SK-N-SH (cell line): ENCODE measurements at regions of chr7 and their contacts with region 1.

Region 1: GRCh38 chr7:876167-876967 is at the start of gene GET4:
- DNase-seq: peak; percentile 98
- H3K4me3 ChIP-seq: peak within 1 kb of the TSS; percentile 57 to 89
- H3K27ac ChIP-seq: peak within 1 kb of the TSS; percentile 61 to 87
- H3K4me1 ChIP-seq: peaks cover 11 to 29% of the 10 kb centered on the region in 2 experiments; a peak in 2 of 4 replicates
- H3K27me3 ChIP-seq: no peaks in the 10 kb centered on the region
- CTCF ChIP-seq: no peak
- EP300 ChIP-seq: 0 out of 4 replicates have a peak, but pooled peaks of 1 of the 2 experiments have one; percentile 17
- RAD21 ChIP-seq: no peak
- polyA plus RNA-seq, gene GET4: 63.1 and 65.4 TPM in 2 replicates

Region 2: GRCh38 chr7:688321-688720 is 188.0 kb before region 1 on chr7:
- CTCF ChIA-PET with region 1: no interaction called
- POLR2A ChIA-PET with region 1: no interaction called
- DNase-seq: no peak
- H3K4me3 ChIP-seq: no peak overlapping the region
- H3K27ac ChIP-seq: no peak overlapping the region
- H3K4me1 ChIP-seq: no peaks in the 10 kb centered on the region
- H3K27me3 ChIP-seq: no peaks in the 10 kb centered on the region
- CTCF ChIP-seq: no peak
- EP300 ChIP-seq: no peak
- RAD21 ChIP-seq: no peak

Region 3: DNA sequence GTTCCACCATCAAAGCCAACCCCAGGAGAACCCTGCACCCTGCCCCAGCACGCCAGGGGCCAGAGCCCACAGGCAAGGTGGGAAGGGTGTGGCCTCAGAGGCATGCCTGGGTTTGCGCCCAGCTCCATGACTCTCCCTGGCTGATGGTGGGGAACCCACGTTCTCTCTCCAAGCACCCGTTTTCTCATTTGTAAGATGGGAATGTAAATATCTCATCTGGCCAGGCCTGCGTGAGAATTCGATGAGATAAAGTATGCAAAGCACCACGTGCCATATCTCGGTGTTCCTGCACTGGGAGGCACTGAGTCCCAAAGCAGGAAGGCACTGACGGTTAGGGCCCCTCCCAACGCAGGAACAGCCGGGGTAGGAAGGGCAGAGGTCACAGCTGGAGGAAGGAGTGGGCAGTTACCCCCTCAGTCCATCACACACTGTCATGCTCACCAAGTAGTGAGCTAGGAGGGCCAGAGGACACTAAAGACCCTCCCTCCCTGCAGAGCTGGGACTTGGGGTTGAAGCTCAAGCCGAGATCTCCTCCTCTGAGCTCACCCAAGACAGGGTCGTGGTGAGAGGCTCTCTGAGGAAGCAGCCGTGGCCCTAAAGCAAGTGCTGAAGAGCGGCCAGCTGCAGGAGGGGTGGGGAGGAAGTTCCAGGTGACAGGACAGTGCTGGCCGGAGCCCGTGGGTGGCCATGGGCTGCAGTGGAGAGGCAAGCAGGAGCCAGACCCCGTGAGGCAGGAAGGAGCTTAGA is 177.1 kb before region 1 on chr7:
- CTCF ChIA-PET with region 1: no interaction called
- POLR2A ChIA-PET with region 1: no interaction called
- DNase-seq: no peak
- H3K4me3 ChIP-seq: no peak overlapping the region
- H3K27ac ChIP-seq: no peak overlapping the region
- H3K4me1 ChIP-seq: no peaks in the 10 kb centered on the region
- H3K27me3 ChIP-seq: no peaks in the 10 kb centered on the region
- CTCF ChIP-seq: no peak
- EP300 ChIP-seq: no peak
- RAD21 ChIP-seq: no peak

Region 4: GRCh38 chr7:749140-749551 is 127.2 kb before region 1 on chr7:
- CTCF ChIA-PET with region 1: no interaction called
- POLR2A ChIA-PET with region 1: no interaction called
- DNase-seq: peak; percentile 90
- H3K4me3 ChIP-seq: no peak overlapping the region
- H3K27ac ChIP-seq: peak overlapping the region in 1 of 2 experiments; percentile 68; a peak in 2 of 4 replicates
- H3K4me1 ChIP-seq: peaks cover 0 to 21% of the 10 kb centered on the region in 2 experiments; a peak in 2 of 4 replicates
- H3K27me3 ChIP-seq: no peaks in the 10 kb centered on the region
- CTCF ChIP-seq: no peak
- EP300 ChIP-seq: 0 out of 4 replicates have a peak, but pooled peaks of 1 of the 2 experiments have one; percentile 19
- RAD21 ChIP-seq: no peak

Region 5: GRCh38 chr7:768881-769504 is 107.4 kb before region 1 on chr7:
- CTCF ChIA-PET with region 1: interaction called, 21 read pairs
- POLR2A ChIA-PET with region 1: interaction called, 3 read pairs
- DNase-seq: peak; percentile 78
- H3K4me3 ChIP-seq: peak overlapping the region; percentile 52 to 55
- H3K27ac ChIP-seq: peak overlapping the region; percentile 90 to 98
- H3K4me1 ChIP-seq: peaks cover 21 to 45% of the 10 kb centered on the region in 2 experiments
- H3K27me3 ChIP-seq: no peaks in the 10 kb centered on the region
- CTCF ChIP-seq: peak; percentile 39
- EP300 ChIP-seq: no peak
- RAD21 ChIP-seq: peak; percentile 11; the same call in 1 of the 2 replicates

Region 6: GRCh38 chr7:786472-787255 is 89.7 kb before region 1 on chr7:
- CTCF ChIA-PET with region 1: interaction called, 103 read pairs
- POLR2A ChIA-PET with region 1: no interaction called
- DNase-seq: peak; percentile 95
- H3K4me3 ChIP-seq: no peak overlapping the region
- H3K27ac ChIP-seq: no peak overlapping the region
- H3K4me1 ChIP-seq: no peaks in the 10 kb centered on the region; a peak in 1 of 4 replicates
- H3K27me3 ChIP-seq: no peaks in the 10 kb centered on the region
- CTCF ChIP-seq: peak; percentile 98
- EP300 ChIP-seq: no peak
- RAD21 ChIP-seq: peak; percentile 92

Region 7: GRCh38 chr7:816300-816750 is 60.0 kb before region 1 on chr7:
- CTCF ChIA-PET with region 1: interaction called, 31 read pairs
- POLR2A ChIA-PET with region 1: interaction called, 3 read pairs
- DNase-seq: peak; percentile 100
- H3K4me3 ChIP-seq: peak overlapping the region; percentile 55; a peak in 3 of 4 replicates
- H3K27ac ChIP-seq: peak overlapping the region in 1 of 2 experiments; percentile 83; a peak in 1 of 4 replicates
- H3K4me1 ChIP-seq: peaks cover 14 to 28% of the 10 kb centered on the region in 2 experiments
- H3K27me3 ChIP-seq: no peaks in the 10 kb centered on the region
- CTCF ChIP-seq: no peak
- EP300 ChIP-seq: no peak
- RAD21 ChIP-seq: no peak

Region 8: GRCh38 chr7:831596-832166 is 44.7 kb before region 1 on chr7:
- CTCF ChIA-PET with region 1: interaction called, 112 read pairs
- POLR2A ChIA-PET with region 1: no interaction called
- DNase-seq: no peak
- H3K4me3 ChIP-seq: peak overlapping the region in 1 of 2 experiments; percentile 27; a peak in 3 of 4 replicates
- H3K27ac ChIP-seq: peak overlapping the region; percentile 29 to 98; a peak in 3 of 4 replicates
- H3K4me1 ChIP-seq: peaks cover 20 to 26% of the 10 kb centered on the region in 2 experiments; a peak in 3 of 4 replicates
- H3K27me3 ChIP-seq: no peaks in the 10 kb centered on the region
- CTCF ChIP-seq: no peak
- EP300 ChIP-seq: peak in 1 of 2 experiments; percentile 71; a peak in 1 of 4 replicates
- RAD21 ChIP-seq: no peak

Region 9: GRCh38 chr7:859359-860030 is 16.9 kb before region 1 on chr7:
- CTCF ChIA-PET with region 1: interaction called, 123 read pairs
- POLR2A ChIA-PET with region 1: interaction called, 3 read pairs
- DNase-seq: no peak
- H3K4me3 ChIP-seq: no peak overlapping the region
- H3K27ac ChIP-seq: peak overlapping the region in 1 of 2 experiments; percentile 3; a peak in 1 of 4 replicates
- H3K4me1 ChIP-seq: peaks cover 0 to 19% of the 10 kb centered on the region in 2 experiments; a peak in 1 of 4 replicates
- H3K27me3 ChIP-seq: no peaks in the 10 kb centered on the region
- CTCF ChIP-seq: no peak
- EP300 ChIP-seq: no peak
- RAD21 ChIP-seq: no peak